ENCODE measurements at regions of chr16 and their contacts with region 1.

Region 1: DNA sequence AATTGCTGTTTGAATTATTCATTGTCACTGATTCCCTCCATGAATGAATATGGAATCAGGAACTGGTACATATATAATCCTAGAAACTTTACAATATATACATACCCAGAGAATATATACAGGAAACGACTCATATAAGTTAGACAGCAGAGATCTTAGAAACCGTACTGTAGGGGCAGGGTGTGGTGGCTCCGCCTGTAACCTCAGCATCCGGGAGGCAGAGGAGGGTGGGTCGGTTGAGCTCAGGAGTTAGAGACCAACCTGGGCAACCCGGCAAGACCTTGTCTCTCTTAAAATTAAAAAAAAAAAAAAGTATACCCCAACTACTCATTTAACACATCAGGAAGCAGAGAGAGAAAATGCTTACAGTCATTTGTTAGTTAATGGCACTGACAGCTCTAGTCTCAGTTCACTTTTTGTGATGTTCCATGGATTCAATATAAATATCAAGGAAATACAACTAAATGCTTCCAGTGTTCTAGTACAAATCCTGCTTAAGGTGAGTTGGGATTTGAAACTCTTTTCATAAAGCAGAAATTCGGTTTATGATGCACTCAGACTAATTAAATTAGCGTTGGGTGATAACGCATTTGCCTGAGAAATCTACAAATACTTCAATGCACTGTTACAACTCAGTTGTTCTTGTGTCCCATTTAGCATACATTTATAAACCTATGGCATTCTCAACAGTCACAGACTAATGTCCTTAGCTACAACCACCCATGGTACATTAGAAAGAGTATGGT is 5.6 kb downstream of the GLG1 start:
- DNase-seq: peak; percentile 85
- H3K4me3 Mint-ChIP-seq: peak overlapping the region; percentile 72
- H3K27ac Mint-ChIP-seq: peak overlapping the region; percentile 95
- H3K4me1 Mint-ChIP-seq: peaks cover 68% of the 10 kb centered on the region
- H3K27me3 Mint-ChIP-seq: no peaks in the 10 kb centered on the region

Region 2: DNA sequence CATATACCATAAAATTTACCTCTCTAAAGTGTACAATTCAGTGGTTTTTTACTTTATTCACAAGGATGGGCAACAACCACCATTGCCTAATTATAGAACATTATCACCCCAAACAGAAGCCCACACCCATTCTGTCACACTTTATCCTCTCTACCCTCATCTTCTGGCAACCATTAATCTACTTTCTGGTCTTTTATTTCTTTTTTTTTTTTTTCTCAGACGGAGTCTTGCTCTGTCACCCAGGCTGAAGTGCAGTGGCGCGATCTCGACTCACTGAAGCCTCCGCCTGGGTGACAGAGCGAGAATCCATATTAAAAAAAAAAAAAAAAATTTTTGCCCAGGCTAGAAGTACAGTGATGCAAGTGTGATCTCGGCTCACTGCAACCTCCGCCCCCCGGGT is 89.3 kb before region 1 on chr16:
- CTCF ChIA-PET with region 1: no interaction called
- POLR2A ChIA-PET with region 1: no interaction called
- DNase-seq: no peak
- H3K4me3 Mint-ChIP-seq: no peak overlapping the region
- H3K27ac Mint-ChIP-seq: no peak overlapping the region
- H3K4me1 Mint-ChIP-seq: peaks cover 15% of the 10 kb centered on the region
- H3K27me3 Mint-ChIP-seq: no peaks in the 10 kb centered on the region

Region 3: DNA sequence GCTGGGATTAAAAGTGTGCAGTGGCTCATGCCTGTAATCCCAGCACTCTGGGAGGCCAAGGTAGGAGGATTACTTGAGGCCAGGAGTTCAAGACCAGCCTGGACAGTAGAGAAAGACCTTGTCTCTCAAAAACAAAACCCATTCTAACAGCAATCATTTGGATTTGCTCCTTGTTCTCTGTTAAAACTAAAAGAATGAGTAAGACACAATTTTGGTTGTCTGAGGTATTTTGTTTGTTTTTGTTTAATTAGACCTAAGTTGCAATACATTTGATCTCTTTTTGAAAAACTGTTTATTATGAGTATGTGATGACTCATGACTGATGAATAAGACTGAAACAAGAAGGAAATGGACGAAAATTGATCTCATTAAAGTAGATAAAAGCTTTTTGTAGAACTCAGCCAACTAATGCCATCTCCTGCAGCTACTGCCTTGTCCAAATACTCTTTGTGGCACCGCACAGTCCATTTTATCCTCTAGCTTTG is 23.4 kb before region 1 on chr16:
- CTCF ChIA-PET with region 1: interaction called, 4 read pairs
- POLR2A ChIA-PET with region 1: interaction called, 21 read pairs
- DNase-seq: no peak
- H3K4me3 Mint-ChIP-seq: peak overlapping the region; percentile 27
- H3K27ac Mint-ChIP-seq: peak overlapping the region; percentile 12
- H3K4me1 Mint-ChIP-seq: peaks cover 41% of the 10 kb centered on the region
- H3K27me3 Mint-ChIP-seq: no peaks in the 10 kb centered on the region

Region 4: DNA sequence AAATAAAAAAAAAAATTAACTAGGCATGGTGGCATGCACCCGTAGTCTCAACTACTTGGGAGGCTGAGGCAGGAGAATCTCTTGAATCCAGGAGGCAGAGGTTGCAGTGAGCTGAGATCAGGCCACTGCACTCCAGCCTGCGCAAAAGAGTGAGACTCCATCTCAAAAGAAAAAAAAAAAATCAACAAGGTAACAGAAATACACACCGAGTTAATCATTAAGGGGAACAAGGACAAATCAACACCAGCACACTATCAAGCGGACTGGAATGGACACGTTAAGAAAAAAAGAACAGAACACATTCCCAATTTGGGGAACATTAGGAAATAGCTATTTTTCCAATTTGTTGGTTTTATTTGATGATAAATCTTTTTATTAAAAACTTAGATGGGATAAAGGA is 34.0 kb after region 1 on chr16:
- CTCF ChIA-PET with region 1: no interaction called
- POLR2A ChIA-PET with region 1: no interaction called
- DNase-seq: no peak
- H3K4me3 Mint-ChIP-seq: no peak overlapping the region
- H3K27ac Mint-ChIP-seq: no peak overlapping the region
- H3K4me1 Mint-ChIP-seq: peaks cover 2% of the 10 kb centered on the region
- H3K27me3 Mint-ChIP-seq: no peaks in the 10 kb centered on the region